T-cell (primary cell): ENCODE measurements at regions of chr15 and their contacts with region 1.

Region 1: DNA sequence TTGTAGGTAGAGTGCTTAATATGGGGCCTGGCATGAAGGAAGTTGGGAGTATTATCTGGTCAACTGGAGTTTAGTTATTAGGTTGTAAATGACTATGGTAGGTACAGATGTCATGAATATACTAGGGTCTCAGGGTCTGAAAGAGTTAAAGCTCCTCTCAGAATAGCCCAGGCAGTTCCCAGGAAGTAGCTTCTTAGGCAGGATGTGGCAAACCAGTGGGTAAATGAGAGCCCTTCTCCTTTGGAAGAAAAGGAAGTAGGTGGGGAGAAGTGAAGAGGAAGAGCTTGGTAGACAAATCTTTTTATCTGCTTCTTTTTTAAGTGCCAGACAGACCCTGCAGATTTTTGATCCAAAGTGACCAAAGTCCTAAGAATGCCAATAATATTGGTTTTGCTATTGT is 24.5 kb downstream of the MAP2K1 start:
- DNase-seq: peak in 1 of 35 experiments; percentile 13
- ATAC-seq: peak; percentile 23 to 70 (median 49)
- H3K4me3 ChIP-seq: peak overlapping the region in 1 of 2 donors; percentile 35
- H3K4me3 Mint-ChIP-seq: peak overlapping the region; percentile 53 to 75 (median 54)
- H3K27ac ChIP-seq: peak overlapping the region; percentile 18
- H3K27ac Mint-ChIP-seq: peak overlapping the region; percentile 72 to 76
- H3K4me1 ChIP-seq: peaks cover 54 to 64% of the 10 kb centered on the region in 2 experiments
- H3K4me1 Mint-ChIP-seq: peaks cover 86 to 90% (median 90%) of the 10 kb centered on the region in 3 donors
- H3K27me3 ChIP-seq: no peaks in the 10 kb centered on the region
- H3K27me3 Mint-ChIP-seq: no peaks in the 10 kb centered on the region

Region 2: DNA sequence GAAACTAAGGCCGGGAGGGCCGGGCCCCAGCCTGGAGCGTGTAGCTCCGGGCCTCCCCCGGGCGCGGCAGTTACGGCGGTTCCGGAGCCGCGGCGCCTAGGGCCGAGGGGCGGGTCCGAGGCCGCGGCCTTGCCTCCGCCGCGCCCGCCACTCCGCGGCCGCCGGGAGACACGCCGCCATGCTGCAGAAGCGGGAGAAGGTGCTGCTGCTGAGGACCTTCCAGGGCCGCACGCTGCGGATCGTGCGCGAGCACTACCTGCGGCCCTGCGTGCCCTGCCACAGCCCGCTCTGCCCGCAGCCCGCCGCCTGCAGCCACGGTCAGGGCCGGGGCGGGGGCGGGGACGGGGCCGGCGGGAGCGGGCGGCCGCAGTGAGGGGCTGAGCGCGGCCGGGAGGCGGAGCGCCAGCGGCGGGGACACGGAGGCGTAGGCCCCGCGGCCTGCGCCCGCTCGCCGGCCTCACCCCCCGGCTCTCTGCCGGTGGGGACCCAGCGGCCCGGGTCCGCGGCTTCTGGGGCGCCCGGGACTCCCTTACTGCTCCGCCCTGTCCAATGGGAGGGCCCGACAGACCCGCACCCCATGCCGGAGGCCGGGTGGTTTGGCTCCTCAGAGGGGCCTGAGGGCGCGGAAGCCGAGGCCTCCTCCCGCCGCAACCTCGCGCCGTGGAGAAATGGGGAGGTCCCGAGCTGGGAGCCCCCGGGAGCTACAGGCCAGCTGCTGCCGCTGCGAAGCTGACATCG is 117.6 kb before region 1 on chr15 and contains the start of gene DIS3L:
- CTCF ChIA-PET with region 1: interaction called in 1 of 2 experiments, 10 read pairs
- POLR2A ChIA-PET with region 1: no interaction called
- DNase-seq: peak; percentile 27 to 80 (median 54)
- ATAC-seq: peak; percentile 81 to 84 (median 82)
- H3K4me3 ChIP-seq: peak within 1 kb of the TSS; percentile 68 to 85
- H3K4me3 Mint-ChIP-seq: peak within 1 kb of the TSS; percentile 82 to 91 (median 88)
- H3K27ac ChIP-seq: peak within 1 kb of the TSS; percentile 91
- H3K27ac Mint-ChIP-seq: peak within 1 kb of the TSS; percentile 92 to 96
- H3K4me1 ChIP-seq: peaks cover 18 to 33% of the 10 kb centered on the region in 2 experiments
- H3K4me1 Mint-ChIP-seq: peaks cover 37 to 53% (median 53%) of the 10 kb centered on the region in 3 donors
- H3K27me3 ChIP-seq: no peaks in the 10 kb centered on the region
- H3K27me3 Mint-ChIP-seq: no peaks in the 10 kb centered on the region
- total RNA-seq, gene DIS3L: 29.9 to 36.9 (median 30.2) TPM